ENCODE measurements at regions of chr20 and their contacts with region 1.

Region 1: DNA sequence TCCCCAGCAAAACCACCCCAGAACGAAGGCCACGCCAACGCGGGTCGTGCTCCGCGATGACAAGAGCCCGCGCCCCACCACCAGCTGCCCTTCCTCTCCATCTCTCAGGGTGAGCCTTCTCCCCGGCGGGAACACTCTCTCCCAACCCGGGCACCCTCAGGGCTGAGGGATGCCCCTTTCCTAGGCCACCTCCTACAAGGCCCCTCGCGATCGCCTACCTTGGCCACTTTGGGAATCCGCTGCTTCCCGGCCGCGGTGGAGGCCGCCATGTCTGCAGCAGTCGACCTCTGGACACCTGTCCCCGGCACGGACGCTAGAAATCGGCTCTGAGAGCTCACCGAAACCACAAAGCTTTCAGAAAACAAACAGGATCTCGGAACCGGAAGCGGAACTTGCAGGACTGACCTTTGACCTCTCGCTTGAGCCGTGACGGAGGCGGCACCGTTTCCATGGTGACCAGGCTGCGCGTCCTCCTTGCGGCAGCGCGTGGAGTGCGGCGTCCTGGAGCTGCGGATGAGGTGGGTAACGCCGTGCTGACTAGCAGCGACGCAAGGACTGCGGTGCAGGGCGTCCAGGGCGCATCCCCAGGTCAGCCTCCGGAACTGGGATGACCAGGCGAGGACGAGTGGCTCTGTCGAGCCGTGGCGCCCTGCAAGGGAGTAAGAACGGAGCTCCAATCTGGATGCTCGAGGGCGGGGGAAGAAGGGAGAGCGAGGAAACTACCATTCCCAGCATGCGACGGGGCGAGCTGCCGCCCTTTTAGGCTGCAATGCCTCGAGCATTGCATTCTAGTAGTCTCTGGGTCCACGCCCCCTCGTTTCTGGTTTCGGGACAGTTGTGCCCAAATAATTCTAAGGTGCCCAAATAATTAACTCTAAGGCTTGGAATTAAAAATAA is at the starts of genes CFAP61 and CRNKL1:
- DNase-seq: peak; percentile 98
- ATAC-seq: peak; percentile 95
- H3K4me3 Mint-ChIP-seq: peak within 1 kb of the TSS; percentile 99
- H3K27ac Mint-ChIP-seq: peak within 1 kb of the TSS; percentile 98
- H3K4me1 Mint-ChIP-seq: peaks cover 14% of the 10 kb centered on the region
- H3K27me3 Mint-ChIP-seq: no peaks in the 10 kb centered on the region
- total RNA-seq, gene CFAP61: 0.39 to 0.51 TPM
- total RNA-seq, gene CRNKL1: 19.9 to 22.2 TPM

Region 2: GRCh38 chr20:18566892-18567742 is 1485.2 kb before region 1 on chr20 and contains the start of gene SMIM26:
- CTCF ChIA-PET with region 1: no interaction called
- POLR2A ChIA-PET with region 1: no interaction called
- intact Hi-C with region 1: loop called in 1 of 2 experiments (anchors 1 kb)
- DNase-seq: peak; percentile 97
- ATAC-seq: peak; percentile 100
- H3K4me3 Mint-ChIP-seq: peak within 1 kb of the TSS; percentile 98
- H3K27ac Mint-ChIP-seq: peak within 1 kb of the TSS; percentile 92
- H3K4me1 Mint-ChIP-seq: peaks cover 13% of the 10 kb centered on the region
- H3K27me3 Mint-ChIP-seq: no peaks in the 10 kb centered on the region
- total RNA-seq, gene SMIM26: 64.4 to 66.2 TPM

Region 3: GRCh38 chr20:19683188-19683587 is 369.1 kb before region 1 on chr20:
- CTCF ChIA-PET with region 1: no interaction called
- POLR2A ChIA-PET with region 1: no interaction called
- intact Hi-C with region 1: no loop called
- DNase-seq: no peak
- ATAC-seq: no peak
- H3K4me3 Mint-ChIP-seq: no peak overlapping the region
- H3K27ac Mint-ChIP-seq: no peak overlapping the region
- H3K4me1 Mint-ChIP-seq: no peaks in the 10 kb centered on the region
- H3K27me3 Mint-ChIP-seq: peaks cover 3% of the 10 kb centered on the region

Region 4: DNA sequence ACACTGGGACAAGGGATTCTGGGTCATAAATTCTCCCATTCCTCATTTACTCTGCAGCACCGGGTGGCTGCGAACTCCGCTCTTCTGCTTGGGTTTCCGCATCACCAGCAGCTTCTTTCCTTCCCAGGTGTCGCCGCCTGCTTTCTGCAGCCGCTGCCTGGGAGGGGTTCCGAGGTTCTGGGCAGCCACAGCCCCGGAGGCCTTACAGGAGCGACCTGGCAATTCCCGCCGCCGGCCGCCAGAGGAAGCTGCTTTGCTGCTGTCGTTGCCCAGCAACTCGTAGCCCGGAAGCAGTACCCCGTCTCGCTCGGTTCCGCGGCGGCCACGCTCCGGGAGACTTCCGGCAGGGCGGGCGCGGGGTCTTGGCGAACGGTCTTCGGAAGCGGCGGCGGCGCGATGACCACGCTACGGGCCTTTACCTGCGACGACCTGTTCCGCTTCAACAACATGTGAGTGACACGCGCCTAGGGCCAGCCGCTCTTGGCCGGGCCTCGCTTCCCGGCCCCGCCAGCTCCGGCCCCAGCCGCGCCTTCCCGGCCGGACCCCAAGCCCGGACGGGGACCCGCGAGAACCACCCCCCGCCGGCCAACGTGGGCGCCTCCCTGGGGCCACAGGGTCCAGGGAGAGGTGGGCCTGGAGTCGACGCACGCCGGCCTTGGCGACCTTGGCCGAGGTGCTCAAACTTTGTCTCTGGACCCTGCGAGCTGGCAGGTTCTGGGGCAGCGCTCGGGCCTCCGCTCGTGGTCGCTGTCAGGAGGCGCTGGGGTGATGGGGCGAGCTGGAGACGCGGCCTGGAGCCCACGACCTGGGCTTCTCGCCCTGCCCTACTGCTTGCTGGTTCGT is 35.1 kb before region 1 on chr20 and contains the start of gene NAA20:
- CTCF ChIA-PET with region 1: interaction called, 21 read pairs
- POLR2A ChIA-PET with region 1: interaction called, 6 read pairs
- intact Hi-C with region 1: loop called (anchors 1 kb)
- DNase-seq: peak; percentile 96
- ATAC-seq: peak; percentile 98
- H3K4me3 Mint-ChIP-seq: peak within 1 kb of the TSS; percentile 93
- H3K27ac Mint-ChIP-seq: peak within 1 kb of the TSS; percentile 88
- H3K4me1 Mint-ChIP-seq: peaks cover 54% of the 10 kb centered on the region
- H3K27me3 Mint-ChIP-seq: no peaks in the 10 kb centered on the region
- total RNA-seq, gene NAA20: 58.6 to 88.7 TPM

Region 5: DNA sequence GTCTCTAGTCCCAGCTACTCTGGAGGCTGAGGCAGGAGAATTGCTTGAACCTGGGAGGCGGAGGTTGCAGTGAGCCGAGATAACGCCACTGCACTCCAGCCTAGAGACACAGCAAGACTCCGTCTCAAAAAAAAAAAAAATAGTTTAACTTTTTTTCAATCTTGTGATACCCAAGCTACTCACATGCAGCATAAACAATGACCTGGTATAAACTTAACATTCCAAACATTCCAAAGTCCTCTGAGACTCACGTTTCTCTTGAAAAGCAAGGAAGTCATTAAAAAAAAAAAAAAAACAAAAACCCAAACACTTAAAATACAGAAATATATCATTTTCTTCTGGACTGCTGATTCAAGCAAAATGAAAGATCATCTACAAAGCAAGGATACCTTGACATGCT is 14.4 kb before region 1 on chr20:
- CTCF ChIA-PET with region 1: interaction called, 12 read pairs
- POLR2A ChIA-PET with region 1: no interaction called
- intact Hi-C with region 1: no loop called
- DNase-seq: no peak
- ATAC-seq: no peak
- H3K4me3 Mint-ChIP-seq: no peak overlapping the region
- H3K27ac Mint-ChIP-seq: no peak overlapping the region
- H3K4me1 Mint-ChIP-seq: no peaks in the 10 kb centered on the region
- H3K27me3 Mint-ChIP-seq: no peaks in the 10 kb centered on the region

Region 6: GRCh38 chr20:20712474-20713243 is 660.3 kb after region 1 on chr20 and contains the start of gene RALGAPA2:
- CTCF ChIA-PET with region 1: interaction called, 3 read pairs
- POLR2A ChIA-PET with region 1: interaction called, 3 read pairs
- intact Hi-C with region 1: loop called (anchors 1 to 2 kb)
- DNase-seq: peak; percentile 97
- ATAC-seq: peak; percentile 97
- H3K4me3 Mint-ChIP-seq: peak within 1 kb of the TSS; percentile 90
- H3K27ac Mint-ChIP-seq: peak within 1 kb of the TSS; percentile 95
- H3K4me1 Mint-ChIP-seq: peaks cover 27% of the 10 kb centered on the region
- H3K27me3 Mint-ChIP-seq: peaks cover 2% of the 10 kb centered on the region
- total RNA-seq, gene RALGAPA2: 20.2 to 26.4 TPM

Region 7: GRCh38 chr20:21303061-21303871 is 1250.9 kb after region 1 on chr20 and contains the start of gene XRN2:
- CTCF ChIA-PET with region 1: no interaction called
- POLR2A ChIA-PET with region 1: no interaction called
- intact Hi-C with region 1: loop called in 1 of 2 experiments (anchors 2 kb)
- DNase-seq: peak; percentile 98
- ATAC-seq: peak; percentile 85
- H3K4me3 Mint-ChIP-seq: peak within 1 kb of the TSS; percentile 93
- H3K27ac Mint-ChIP-seq: peak within 1 kb of the TSS; percentile 98
- H3K4me1 Mint-ChIP-seq: peaks cover 31% of the 10 kb centered on the region
- H3K27me3 Mint-ChIP-seq: no peaks in the 10 kb centered on the region
- total RNA-seq, gene XRN2: 87.1 to 88.4 TPM